AG04449 (cell line): ENCODE measurements at regions of chr4 and their contacts with region 1.

Region 1: GRCh38 chr4:83272900-83273299 is 11.7 kb downstream of the COQ2 start:
- DNase-seq: no peak
- H3K4me3 ChIP-seq: no peak overlapping the region
- CTCF ChIP-seq: no peak

Region 2: DNA sequence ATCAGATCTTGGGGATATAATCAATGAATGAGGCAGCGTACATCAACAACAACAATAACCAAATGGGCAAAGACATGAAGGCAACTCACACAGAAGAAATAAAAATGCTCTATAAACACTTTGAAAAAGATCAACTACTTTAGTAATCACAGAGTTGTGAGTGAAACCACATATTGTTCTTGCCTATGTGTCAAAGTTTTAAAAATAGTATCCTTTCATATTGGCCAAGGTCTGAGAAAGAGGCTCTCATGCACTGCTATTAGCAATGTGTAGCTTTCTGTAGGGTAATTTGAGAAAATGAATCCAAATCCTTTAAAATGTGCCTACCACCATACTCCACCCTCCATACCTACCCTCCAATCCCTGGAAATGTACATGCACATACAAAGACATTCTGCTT is 13.3 kb before region 1 on chr4:
- CTCF ChIA-PET with region 1: interaction called, 10 read pairs
- POLR2A ChIA-PET with region 1: no interaction called
- DNase-seq: no peak
- H3K4me3 ChIP-seq: no peak overlapping the region
- CTCF ChIP-seq: no peak

Region 3: DNA sequence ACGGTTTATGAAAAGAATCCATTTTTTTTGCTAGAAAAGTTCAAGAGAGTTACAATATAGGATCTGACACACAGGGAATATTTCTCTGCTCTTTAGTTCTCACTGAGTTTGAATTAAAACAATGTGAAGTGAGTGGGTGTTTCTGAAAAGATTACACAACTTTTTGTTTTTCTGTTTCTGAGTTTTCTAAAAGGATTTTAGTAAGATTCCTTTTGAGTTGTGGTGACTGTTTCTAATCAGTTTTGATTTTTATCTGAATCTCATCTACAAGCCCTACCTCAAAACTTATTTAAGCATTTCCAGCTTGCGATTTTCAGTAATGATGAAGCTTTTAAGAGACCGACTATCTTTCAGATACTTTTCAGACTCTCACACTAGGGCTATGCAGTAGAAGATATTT is 404.8 kb after region 1 on chr4:
- CTCF ChIA-PET with region 1: no interaction called
- POLR2A ChIA-PET with region 1: no interaction called
- DNase-seq: no peak
- H3K4me3 ChIP-seq: no peak overlapping the region
- CTCF ChIP-seq: no peak